HCT116 (cell line): ENCODE measurements at regions of chr1 and their contacts with region 1.

Region 1: GRCh38 chr1:26811057-26811456 is 15.4 kb upstream of the ZDHHC18 start:
- DNase-seq: no peak
- ATAC-seq: no peak
- H3K4me3 ChIP-seq: no peak overlapping the region
- H3K27ac ChIP-seq: no peak overlapping the region
- H3K4me1 ChIP-seq: peaks cover 0 to 14% of the 10 kb centered on the region in 2 experiments; a peak in 1 of 4 replicates
- H3K27me3 ChIP-seq: no peaks in the 10 kb centered on the region
- CTCF ChIP-seq: no peak
- POLR2A ChIP-seq: no peak
- RAD21 ChIP-seq: no peak

Region 2: GRCh38 chr1:26799479-26800142 is 11.4 kb before region 1 on chr1:
- CTCF ChIA-PET with region 1: interaction called, 17 read pairs
- POLR2A ChIA-PET with region 1: interaction called, 3 read pairs
- RAD21 ChIA-PET with region 1: no interaction called
- intact Hi-C with region 1: no loop called
- DNase-seq: peak; percentile 47
- ATAC-seq: peak; percentile 85
- H3K4me3 ChIP-seq: peak overlapping the region in 1 of 2 experiments; percentile 14; a peak in 2 of 4 replicates
- H3K27ac ChIP-seq: peak overlapping the region; percentile 28
- H3K4me1 ChIP-seq: peaks cover 16 to 26% of the 10 kb centered on the region in 2 experiments
- H3K27me3 ChIP-seq: no peaks in the 10 kb centered on the region
- CTCF ChIP-seq: no peak
- POLR2A ChIP-seq: no peak
- RAD21 ChIP-seq: no peak; the same call in 1 of the 2 replicates